Activated CD4-positive, alpha-beta memory T cell treated with anti-CD3 and anti-CD28 coated beads for 36 hours (primary cell): ENCODE measurements at regions of chr9 and their contacts with region 1.

Region 1: DNA sequence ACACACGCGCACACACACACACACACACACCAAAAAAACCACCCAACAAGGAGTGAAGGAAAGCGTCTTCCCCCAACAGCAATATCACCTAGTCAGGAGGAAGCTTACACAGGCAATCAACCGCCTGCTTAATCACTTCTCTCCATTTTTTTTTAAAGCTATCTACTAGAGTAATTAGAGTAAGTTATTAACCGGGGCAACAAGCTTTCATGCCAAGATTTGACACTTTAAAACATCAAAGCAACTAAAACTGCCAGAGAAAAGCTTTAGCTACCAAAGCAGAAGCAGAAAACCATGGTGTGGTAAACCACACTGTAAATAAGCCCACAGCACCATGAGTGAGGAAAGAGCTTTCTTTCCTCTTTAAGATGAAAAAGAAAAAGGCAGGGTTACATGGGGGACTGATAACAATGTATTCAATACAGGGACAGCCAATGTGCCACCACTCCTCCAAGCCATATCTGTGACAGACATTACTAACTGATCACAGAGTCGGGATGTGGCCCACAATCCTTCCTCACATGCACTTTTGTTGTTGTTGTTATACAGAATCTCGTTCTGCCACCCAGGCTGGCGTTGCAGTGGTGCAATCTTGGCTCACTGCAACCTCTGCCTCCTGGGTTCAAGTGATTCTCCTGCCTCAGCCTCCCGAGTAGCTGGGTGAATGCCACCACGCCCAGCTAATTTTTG is 282.1 kb downstream of the CRB2 start:
- DNase-seq: peak; percentile 15
- H3K4me3 Mint-ChIP-seq: peak overlapping the region; percentile 27
- H3K27ac Mint-ChIP-seq: no peak overlapping the region
- H3K4me1 Mint-ChIP-seq: peaks cover 44% of the 10 kb centered on the region
- H3K27me3 Mint-ChIP-seq: no peaks in the 10 kb centered on the region

Region 2: DNA sequence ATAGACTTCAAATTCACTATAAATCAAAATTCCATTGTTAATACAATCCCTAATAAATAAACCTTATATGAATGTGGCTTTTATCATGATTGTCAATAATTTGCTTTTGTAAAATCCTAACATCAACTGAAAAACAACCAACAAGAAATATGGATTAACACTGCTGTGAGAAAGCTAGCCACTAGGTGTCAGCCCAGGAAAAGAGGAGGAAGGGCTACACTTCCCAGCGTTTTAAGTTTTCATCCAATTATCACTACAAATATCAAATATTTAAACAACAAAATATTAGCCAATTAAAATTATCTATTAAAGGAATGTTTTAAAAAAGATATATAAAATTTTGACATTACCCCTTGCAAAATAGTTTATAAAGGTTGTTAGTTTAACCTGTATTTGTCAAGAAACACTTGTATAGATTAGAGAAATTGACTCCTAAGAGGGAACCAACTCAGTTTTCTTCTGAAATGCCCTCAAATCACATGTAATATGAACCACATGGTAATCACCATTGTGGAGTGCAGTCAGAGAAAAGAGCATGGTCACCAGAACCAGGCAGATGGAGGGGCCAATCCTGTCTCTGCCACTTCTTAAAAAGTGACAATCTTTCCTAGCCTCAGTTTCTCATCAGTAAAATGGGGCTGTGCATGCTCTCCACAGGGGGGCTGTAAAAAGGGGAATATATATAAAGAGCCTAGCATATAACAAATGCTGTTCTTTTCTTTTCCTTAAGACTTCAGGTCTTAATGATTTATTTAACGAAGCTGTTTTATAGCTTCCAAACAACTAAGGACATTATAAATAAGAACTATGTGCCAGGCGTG is 93.9 kb before region 1 on chr9:
- CTCF ChIA-PET with region 1: no interaction called
- POLR2A ChIA-PET with region 1: no interaction called
- intact Hi-C with region 1: loop called (anchors 5 kb)
- DNase-seq: peak; percentile 19
- H3K4me3 Mint-ChIP-seq: no peak overlapping the region
- H3K27ac Mint-ChIP-seq: no peak overlapping the region
- H3K4me1 Mint-ChIP-seq: peaks cover 8% of the 10 kb centered on the region
- H3K27me3 Mint-ChIP-seq: no peaks in the 10 kb centered on the region

Region 3: DNA sequence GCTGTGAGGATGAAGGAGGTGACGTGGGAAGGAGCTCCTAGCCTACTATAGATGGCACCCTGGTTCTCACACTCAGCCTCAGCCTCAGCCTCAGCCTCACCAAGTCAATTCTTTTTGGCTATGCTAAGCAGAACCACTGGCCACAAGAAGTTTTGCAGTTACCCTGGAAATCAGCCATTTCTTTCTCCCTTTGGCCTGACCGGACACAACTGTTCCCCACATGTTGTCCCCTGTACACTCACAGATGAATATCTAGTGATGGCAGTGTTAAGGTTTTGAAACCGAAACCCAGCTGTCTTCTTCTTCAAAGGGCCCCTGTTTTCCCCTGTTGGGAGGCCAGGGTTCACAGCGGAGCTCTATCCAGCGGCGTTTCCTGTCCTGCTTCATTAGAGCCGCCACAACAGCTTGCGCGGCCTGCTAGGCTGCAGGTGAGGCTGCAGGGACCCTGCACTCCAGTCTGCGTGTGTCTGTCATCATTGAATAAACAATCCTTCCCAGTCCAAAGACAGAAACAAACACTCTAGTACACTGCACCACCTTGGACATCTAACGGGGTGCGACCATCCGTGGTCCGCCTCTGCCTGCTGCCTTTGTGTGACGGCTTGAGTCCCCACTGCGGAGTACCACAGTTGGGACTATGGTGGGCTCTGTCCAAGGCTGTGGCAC is 41.4 kb after region 1 on chr9:
- CTCF ChIA-PET with region 1: no interaction called
- POLR2A ChIA-PET with region 1: no interaction called
- intact Hi-C with region 1: loop called (anchors 5 kb)
- DNase-seq: peak; percentile 31
- H3K4me3 Mint-ChIP-seq: no peak overlapping the region
- H3K27ac Mint-ChIP-seq: no peak overlapping the region
- H3K4me1 Mint-ChIP-seq: peaks cover 22% of the 10 kb centered on the region
- H3K27me3 Mint-ChIP-seq: no peaks in the 10 kb centered on the region